HEK293 (cell line): ENCODE measurements at regions of chr1 and their contacts with region 1.

Region 1: DNA sequence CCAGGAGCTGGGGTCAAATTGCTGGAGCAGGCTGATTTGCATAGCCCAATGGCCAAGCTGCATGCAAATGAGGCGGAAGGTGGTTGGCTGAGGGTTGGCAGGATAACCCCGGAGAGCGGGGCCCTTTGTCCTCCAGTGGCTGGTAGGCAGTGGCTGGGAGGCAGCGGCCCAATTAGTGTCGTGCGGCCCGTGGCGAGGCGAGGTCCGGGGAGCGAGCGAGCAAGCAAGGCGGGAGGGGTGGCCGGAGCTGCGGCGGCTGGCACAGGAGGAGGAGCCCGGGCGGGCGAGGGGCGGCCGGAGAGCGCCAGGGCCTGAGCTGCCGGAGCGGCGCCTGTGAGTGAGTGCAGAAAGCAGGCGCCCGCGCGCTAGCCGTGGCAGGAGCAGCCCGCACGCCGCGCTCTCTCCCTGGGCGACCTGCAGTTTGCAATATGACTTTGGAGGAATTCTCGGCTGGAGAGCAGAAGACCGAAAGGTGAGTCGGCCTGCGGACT is at the start of gene GADD45A:
- H3K4me3 ChIP-seq: peak within 1 kb of the TSS; percentile 92
- H3K27ac ChIP-seq: peak within 1 kb of the TSS; percentile 96
- H3K4me1 ChIP-seq: peaks cover 8% of the 10 kb centered on the region; the same call in 1 of the 2 replicates
- CTCF ChIP-seq: peak; percentile 50

Region 2: DNA sequence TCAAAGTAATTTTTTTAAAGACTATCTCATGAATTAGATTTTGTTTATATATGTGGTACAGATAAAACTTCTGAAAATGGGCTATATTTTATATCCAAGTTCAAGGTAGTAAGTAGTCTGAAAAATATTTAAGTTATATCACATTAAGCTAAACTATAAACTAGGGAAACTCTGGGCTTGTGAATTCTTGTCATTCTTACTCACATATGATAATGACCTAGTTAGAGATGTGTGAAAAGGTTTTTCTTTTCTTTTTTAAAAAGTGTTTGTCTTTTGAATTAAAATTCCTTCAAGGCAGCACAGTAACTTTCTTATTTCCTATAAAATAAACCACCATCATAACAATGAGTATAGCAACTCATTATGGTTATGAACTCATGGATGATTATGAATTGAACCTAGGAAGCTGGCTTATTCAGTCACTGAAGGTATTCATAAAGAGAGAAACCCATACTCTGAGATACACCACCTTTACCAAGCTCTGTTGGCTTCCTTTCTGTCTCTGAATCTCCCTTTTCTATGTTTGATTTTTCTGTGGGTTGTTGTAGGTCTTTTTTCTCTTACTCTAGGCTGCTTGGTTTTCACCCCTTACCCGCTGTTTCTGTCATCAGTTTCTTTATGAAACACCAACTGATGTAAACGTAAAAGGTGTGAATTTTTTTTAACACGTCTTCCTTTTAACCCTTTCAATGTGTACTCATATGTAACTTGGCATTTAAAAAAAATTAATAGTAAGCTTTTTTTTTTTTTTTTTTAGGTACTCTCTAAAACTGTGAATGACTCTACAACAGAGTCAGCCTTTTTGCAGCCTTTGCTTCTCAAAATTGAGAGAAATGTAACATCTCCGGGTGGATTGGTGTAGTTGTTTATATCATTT is 352.2 kb before region 1 on chr1:
- CTCF ChIA-PET with region 1: no interaction called
- POLR2A ChIA-PET with region 1: no interaction called
- H3K4me3 ChIP-seq: no peak overlapping the region
- H3K27ac ChIP-seq: no peak overlapping the region
- H3K4me1 ChIP-seq: no peaks in the 10 kb centered on the region
- CTCF ChIP-seq: no peak

Region 3: DNA sequence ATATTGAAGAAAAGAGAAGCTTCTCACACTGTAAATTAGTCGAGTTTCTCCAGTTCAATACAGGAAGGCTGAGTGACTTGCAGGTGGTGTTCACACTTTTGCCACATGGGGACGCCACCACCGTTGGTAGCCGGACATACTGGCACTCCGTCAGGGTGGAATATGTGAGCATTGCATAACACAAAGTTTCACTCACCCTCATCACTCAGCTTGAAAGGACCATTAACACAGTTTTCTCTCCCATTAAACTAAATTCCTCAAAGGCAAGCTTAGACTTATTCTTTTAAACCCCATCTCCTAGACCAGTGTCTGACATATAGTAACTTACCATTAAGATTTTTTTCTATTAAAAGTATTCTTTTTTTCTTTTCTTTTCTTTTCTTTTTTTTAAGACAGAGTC is 149.6 kb before region 1 on chr1:
- CTCF ChIA-PET with region 1: interaction called, 13 read pairs
- POLR2A ChIA-PET with region 1: interaction called, 13 read pairs
- H3K4me3 ChIP-seq: no peak overlapping the region
- H3K27ac ChIP-seq: no peak overlapping the region
- H3K4me1 ChIP-seq: no peaks in the 10 kb centered on the region
- CTCF ChIP-seq: peak; percentile 83

Region 4: GRCh38 chr1:67561704-67562113 is 123.4 kb before region 1 on chr1:
- CTCF ChIA-PET with region 1: interaction called, 41 read pairs
- POLR2A ChIA-PET with region 1: interaction called, 24 read pairs
- H3K4me3 ChIP-seq: no peak overlapping the region
- H3K27ac ChIP-seq: no peak overlapping the region
- H3K4me1 ChIP-seq: no peaks in the 10 kb centered on the region
- CTCF ChIP-seq: peak; percentile 54; the same call in 1 of the 2 replicates

Region 5: DNA sequence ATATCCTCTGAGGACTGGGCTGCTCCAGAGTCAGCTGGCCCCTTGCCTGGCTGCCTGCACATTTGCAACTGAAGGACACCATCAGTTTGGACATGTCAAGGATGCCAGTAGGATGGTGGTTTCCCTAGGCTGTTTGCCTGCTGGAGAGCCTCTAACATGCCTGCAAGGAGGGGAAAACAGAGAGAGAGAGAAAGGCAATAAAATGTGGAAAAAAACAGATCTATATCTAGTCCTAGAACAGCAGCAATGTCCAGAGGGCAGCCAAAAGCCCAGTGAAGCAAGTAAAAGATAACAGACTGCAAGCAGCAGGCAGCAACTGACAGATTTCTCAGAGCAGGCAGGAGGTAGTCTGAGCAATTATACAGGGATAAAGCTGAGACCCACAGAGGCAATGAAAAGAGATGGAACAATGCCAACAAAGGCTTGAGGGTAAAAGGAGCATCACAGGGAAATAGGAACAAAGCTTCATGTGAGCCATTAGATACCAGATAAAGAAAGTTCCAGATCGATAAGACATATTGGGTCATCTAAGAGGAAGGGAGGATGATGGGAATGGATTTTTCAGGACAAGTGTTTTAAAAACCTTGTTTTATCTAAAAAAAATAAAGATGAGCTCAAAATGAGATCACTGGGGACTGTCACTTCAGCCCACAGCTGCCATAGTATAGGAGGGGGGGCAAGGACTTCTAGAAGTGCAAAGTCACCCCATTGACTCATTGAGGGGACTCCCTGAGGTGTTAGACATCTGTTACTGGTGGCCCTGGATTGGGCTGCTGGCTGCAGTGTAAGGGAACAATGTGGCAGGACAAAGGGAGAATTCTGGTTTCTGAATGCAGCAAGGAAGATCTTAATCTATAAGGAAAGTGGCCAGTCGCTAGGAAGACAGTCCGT is 38.7 kb before region 1 on chr1:
- CTCF ChIA-PET with region 1: interaction called, 4 read pairs
- POLR2A ChIA-PET with region 1: interaction called, 33 read pairs
- H3K4me3 ChIP-seq: no peak overlapping the region
- H3K27ac ChIP-seq: no peak overlapping the region
- H3K4me1 ChIP-seq: peaks cover 8% of the 10 kb centered on the region; the same call in 1 of the 2 replicates
- CTCF ChIP-seq: no peak

Region 6: DNA sequence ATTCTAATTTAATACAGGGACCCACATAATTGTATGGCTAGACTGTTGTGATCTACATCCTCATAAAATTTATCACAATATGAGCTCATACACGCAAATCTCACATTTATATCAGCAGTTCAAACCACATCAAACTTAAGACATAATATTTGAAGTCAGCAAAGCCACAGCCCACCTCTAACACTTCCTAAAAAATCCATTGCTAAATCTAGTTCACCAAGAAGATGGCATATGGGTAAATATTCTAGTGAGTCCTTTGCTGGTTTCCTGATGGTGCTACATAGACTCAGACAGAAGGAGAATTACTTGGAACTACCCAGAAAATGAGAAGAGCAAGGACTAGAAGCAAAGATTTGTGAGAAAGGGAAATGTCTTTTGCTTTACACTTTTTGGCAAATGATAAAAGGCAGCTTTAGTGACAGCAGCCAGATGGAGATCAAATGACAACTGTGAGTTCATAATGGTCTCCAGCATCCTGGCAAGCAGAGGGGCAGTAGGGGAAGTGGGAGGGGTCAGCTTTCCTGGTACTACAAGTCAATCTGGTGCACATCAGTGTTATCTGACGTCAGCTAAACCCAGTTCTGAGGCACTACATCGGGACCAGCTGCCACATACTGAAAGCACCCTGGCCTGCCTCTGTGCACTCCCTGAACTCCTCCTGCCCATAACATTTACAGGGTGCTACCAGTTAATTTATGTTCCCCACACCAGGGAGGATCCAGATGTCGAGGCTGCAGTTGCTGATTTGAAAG is 10.7 kb before region 1 on chr1:
- CTCF ChIA-PET with region 1: interaction called, 3 read pairs
- POLR2A ChIA-PET with region 1: interaction called, 43 read pairs
- H3K4me3 ChIP-seq: no peak overlapping the region
- H3K27ac ChIP-seq: no peak overlapping the region
- H3K4me1 ChIP-seq: peaks cover 7% of the 10 kb centered on the region
- CTCF ChIP-seq: no peak

Region 7: DNA sequence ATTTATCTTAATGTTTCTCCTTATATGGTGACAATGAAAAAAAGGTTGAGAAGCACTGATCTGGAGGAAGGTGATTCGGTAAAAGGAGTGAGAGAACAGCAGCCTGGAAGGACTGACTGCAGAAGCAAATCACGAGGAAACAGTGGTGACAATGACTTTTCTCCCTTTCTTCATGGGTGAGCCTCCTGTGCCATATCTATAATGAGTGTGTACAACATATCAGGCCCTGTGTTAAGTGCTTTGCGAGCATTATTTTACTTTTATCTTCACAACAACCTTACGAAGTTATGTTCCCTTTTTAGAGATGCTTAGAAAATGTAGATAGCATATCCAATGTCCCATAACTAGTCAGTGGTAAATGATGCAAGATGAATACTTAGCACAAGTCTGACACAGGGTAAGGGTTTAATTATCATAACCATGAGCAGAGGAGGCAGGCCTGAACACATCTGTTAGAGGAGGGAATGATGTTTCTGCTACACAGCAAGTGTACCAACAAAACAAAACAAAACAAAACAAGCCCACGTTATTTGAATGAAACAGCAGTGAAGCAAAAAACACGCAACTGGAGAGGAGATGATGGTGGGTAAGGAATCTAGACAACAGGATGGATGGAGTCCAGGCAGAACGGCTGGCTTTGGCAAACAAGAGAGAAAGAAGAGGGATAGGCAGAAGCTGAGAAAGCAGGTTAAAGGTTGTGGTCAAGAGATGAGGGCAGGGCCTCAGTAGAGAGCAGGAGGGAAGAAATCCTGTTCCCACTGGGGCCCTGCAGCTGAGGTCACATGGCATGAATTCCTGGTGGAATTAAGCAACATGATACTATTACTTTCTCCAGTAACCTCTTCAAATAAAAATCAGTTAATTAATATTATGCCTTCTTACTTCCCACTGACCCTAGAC is 118.5 kb after region 1 on chr1:
- CTCF ChIA-PET with region 1: no interaction called
- POLR2A ChIA-PET with region 1: no interaction called
- H3K4me3 ChIP-seq: no peak overlapping the region
- H3K27ac ChIP-seq: no peak overlapping the region
- H3K4me1 ChIP-seq: 0 out of 2 replicates have a peak, but pooled peaks cover 5% of the 10 kb centered on the region
- CTCF ChIP-seq: no peak

Region 8: GRCh38 chr1:67832737-67833601 is 147.9 kb after region 1 on chr1 and contains the start of gene GNG12:
- CTCF ChIA-PET with region 1: interaction called, 3 read pairs
- POLR2A ChIA-PET with region 1: interaction called, 20 read pairs
- H3K4me3 ChIP-seq: peak within 1 kb of the TSS; percentile 62
- H3K27ac ChIP-seq: peak within 1 kb of the TSS; percentile 91
- H3K4me1 ChIP-seq: peaks cover 31% of the 10 kb centered on the region
- CTCF ChIP-seq: peak; percentile 64

Region 9: GRCh38 chr1:67897270-67897949 is 212.3 kb after region 1 on chr1:
- CTCF ChIA-PET with region 1: no interaction called
- POLR2A ChIA-PET with region 1: no interaction called
- H3K4me3 ChIP-seq: no peak overlapping the region
- H3K27ac ChIP-seq: no peak overlapping the region
- H3K4me1 ChIP-seq: no peaks in the 10 kb centered on the region
- CTCF ChIP-seq: no peak

Region 10: GRCh38 chr1:67919274-67920072 is 234.4 kb after region 1 on chr1:
- CTCF ChIA-PET with region 1: no interaction called
- POLR2A ChIA-PET with region 1: no interaction called
- H3K4me3 ChIP-seq: no peak overlapping the region
- H3K27ac ChIP-seq: no peak overlapping the region
- H3K4me1 ChIP-seq: no peaks in the 10 kb centered on the region
- CTCF ChIP-seq: no peak